Activated CD4-positive, alpha-beta memory T cell treated with anti-CD3 and anti-CD28 coated beads, Interleukin-2, amount 10 ng/mL, durations not matched to agents 7 days and 5 days (primary cell): ENCODE measurements at regions of chr10 and their contacts with region 1.

Region 1: GRCh38 chr10:13160934-13161856 is at the start of gene MCM10:
- DNase-seq: peak; percentile 98
- H3K4me3 Mint-ChIP-seq: peak within 1 kb of the TSS; percentile 88
- H3K27ac Mint-ChIP-seq: peak within 1 kb of the TSS; percentile 66
- H3K4me1 Mint-ChIP-seq: peaks cover 48% of the 10 kb centered on the region
- H3K27me3 Mint-ChIP-seq: no peaks in the 10 kb centered on the region
- total RNA-seq, gene MCM10: 40.7 to 42.9 TPM

Region 2: DNA sequence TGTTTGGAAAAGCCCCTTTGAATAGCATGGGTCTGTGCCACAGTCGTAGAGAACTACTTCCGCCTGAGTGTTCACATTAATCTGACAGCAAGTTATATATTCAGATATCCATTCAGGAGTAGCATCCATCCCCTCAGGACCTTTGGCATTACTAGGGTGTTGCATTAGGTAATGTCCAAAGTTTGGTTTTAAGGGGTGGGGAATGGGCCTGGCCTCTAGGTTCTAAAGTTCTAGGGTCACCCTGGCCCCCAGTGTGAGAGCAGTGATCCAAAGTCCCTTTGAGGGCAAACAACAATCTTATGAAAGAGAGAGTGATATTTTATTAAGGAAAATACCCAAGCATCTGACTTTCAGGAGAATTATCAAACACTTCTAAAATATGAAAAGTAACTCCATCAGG is 12.4 kb after region 1 on chr10:
- CTCF ChIA-PET with region 1: interaction called, 17 read pairs
- POLR2A ChIA-PET with region 1: interaction called, 3 read pairs
- DNase-seq: no peak
- H3K4me3 Mint-ChIP-seq: no peak overlapping the region
- H3K27ac Mint-ChIP-seq: no peak overlapping the region
- H3K4me1 Mint-ChIP-seq: no peaks in the 10 kb centered on the region
- H3K27me3 Mint-ChIP-seq: no peaks in the 10 kb centered on the region

Region 3: GRCh38 chr10:13180788-13181187 is 19.6 kb after region 1 on chr10:
- CTCF ChIA-PET with region 1: interaction called, 17 read pairs
- POLR2A ChIA-PET with region 1: interaction called, 3 read pairs
- DNase-seq: no peak
- H3K4me3 Mint-ChIP-seq: no peak overlapping the region
- H3K27ac Mint-ChIP-seq: no peak overlapping the region
- H3K4me1 Mint-ChIP-seq: peaks cover 7% of the 10 kb centered on the region
- H3K27me3 Mint-ChIP-seq: no peaks in the 10 kb centered on the region